Mammary epithelial cell (primary cell): ENCODE measurements at regions of chr17 and their contacts with region 1.

Region 1: DNA sequence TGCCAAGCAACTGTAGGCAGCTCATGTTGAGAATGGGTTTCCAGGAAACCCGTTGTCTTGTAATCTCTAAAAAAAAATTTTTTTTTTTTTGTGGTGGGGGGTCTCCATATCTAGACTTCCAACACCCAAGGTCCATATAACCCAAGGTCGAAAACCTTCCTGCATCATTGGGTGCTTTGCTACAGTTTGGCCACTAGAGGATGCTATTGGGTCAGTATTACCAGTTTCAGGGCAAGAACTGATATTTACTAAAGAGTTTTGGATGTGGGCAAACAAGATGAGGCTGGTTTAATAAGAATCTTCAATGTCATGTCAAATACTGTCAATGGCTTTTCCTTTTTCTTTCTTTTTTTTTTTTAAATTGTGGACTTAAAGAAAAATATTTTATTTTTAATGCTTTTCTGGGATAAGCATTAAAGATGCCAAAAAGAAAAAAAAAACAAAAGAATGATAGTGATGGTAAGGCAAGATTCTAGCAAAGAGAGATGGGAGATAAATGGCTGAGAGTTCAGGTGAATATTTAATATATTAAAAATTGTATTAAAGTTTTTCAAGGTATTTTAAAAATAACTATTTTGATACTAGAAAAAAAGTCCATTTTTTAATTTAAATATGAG is 62.2 kb downstream of the DHRS7C start:
- DNase-seq: peak; percentile 41
- H3K4me3 ChIP-seq: no peak overlapping the region
- H3K27ac ChIP-seq: no peak overlapping the region
- H3K4me1 ChIP-seq: peaks cover 4% of the 10 kb centered on the region
- H3K27me3 ChIP-seq: no peaks in the 10 kb centered on the region
- CTCF ChIP-seq: peak; percentile 100

Region 2: DNA sequence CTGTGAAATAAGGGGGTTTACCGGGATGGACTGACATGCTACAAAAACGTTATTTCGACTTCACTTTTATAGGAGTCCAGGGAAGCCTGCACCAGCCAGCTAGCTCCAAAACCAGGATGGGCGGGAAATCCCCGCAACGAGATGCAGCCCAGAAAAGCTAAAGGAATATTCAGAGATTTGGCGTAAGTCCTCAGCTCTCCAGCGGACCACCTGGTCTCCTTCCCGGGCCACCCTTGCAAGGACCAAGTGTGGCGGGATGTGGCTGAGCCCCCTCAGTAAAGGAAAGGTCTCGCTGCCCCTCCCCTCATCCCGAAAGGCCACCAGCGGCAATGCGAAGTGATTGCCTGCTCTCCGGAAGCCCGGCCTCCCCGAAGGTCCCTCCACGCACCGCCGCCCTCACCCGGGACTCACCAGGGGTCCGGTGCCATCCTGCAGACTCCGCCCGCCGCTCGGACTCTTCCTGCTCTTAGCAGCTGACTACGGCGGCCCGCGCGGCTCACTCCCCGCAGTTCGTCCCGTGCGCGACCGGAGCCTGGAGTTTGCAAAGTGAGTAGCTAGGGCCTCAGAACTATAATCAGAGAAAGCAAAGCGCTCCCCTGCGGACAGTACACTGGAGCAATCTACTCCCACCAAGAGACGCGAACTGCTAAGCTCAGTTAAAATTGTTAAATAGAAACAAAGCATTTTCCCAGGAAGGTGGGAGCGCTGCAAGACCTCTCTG is 153.6 kb before region 1 on chr17 and contains the start of gene STX8:
- CTCF ChIA-PET with region 1: no interaction called
- dilution Hi-C with region 1: no loop called
- in situ Hi-C with region 1: no loop called
- intact Hi-C with region 1: loop called (anchors 1 kb)
- DNase-seq: peak; percentile 84
- H3K4me3 ChIP-seq: peak within 1 kb of the TSS; percentile 69 to 76 (median 75)
- H3K27ac ChIP-seq: peak within 1 kb of the TSS; percentile 33
- H3K4me1 ChIP-seq: peaks cover 14% of the 10 kb centered on the region
- H3K27me3 ChIP-seq: no peaks in the 10 kb centered on the region
- CTCF ChIP-seq: no peak
- total RNA-seq, gene STX8: 45.3 to 49.1 TPM

Region 3: DNA sequence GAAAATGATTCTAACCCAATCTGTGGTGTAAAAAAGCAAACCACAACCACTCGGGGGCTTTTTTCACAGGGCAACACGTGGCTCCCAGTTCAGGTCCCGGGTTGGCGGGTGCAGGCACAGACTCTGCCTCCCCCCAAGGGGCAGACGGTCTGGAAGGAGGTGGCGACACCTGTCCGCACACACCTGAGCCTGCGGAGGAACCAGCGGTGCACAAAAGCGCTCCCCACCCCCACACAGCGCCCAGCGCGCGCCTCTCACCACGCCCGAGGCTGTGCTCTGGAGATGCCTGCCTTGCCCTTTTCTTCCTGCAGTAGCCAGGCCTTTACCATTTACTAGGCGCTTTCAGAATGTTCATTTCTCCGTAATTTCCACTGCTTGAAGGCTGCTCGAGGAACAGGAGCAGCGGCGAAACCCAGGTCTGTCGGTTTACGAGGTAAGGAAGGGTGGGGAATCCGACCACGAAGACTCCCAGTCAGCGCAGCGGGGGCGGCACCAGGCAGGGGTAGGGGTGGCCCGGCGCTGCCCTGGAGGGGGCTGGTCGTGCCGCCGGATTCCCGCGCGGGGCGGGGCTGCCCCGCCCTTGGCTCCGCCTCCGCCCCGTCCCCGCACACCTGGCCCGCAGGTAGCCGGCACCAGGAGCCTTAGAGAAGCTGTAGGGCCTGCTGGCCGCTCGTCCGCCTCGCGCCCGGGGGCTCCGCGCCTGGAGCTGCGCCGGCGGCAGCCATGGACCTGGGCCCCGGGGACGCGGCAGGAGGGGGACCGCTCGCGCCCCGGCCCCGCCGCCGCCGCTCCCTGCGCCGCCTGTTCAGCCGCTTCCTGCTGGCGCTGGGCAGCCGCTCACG is 84.0 kb before region 1 on chr17 and contains the start of gene USP43:
- CTCF ChIA-PET with region 1: no interaction called
- dilution Hi-C with region 1: no loop called
- in situ Hi-C with region 1: no loop called
- intact Hi-C with region 1: loop called (anchors 1 kb)
- DNase-seq: peak; percentile 81
- H3K4me3 ChIP-seq: peak within 1 kb of the TSS; percentile 63 to 79 (median 69)
- H3K27ac ChIP-seq: peak within 1 kb of the TSS; percentile 88
- H3K4me1 ChIP-seq: peaks cover 25% of the 10 kb centered on the region
- H3K27me3 ChIP-seq: no peaks in the 10 kb centered on the region
- CTCF ChIP-seq: peak in 1 of 2 donors; percentile 13
- total RNA-seq, gene USP43: 8.0 to 9.3 TPM

Region 4: DNA sequence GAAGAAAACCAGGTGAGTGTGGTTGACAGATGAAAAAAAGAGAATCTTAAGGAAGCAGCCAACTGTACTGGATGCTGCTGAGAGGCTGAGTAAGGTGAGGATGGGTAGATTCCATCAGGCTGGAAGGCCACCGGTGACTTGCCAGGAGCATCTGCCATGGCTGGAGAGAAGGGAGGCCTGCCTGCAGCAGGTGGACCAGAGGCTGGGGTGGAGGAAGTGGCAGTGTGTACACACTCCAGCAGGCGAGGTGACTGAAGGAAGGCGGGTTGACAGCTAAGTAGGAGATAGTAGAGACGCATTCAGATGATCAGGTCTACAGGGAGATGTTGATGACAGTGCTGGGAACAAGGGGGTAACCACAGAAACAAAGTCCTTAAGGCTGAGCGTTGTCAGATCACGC is 14.3 kb before region 1 on chr17:
- CTCF ChIA-PET with region 1: interaction called, 14 read pairs
- dilution Hi-C with region 1: no loop called
- in situ Hi-C with region 1: no loop called
- intact Hi-C with region 1: no loop called
- DNase-seq: no peak
- H3K4me3 ChIP-seq: no peak overlapping the region
- H3K27ac ChIP-seq: no peak overlapping the region
- H3K4me1 ChIP-seq: no peaks in the 10 kb centered on the region
- H3K27me3 ChIP-seq: no peaks in the 10 kb centered on the region
- CTCF ChIP-seq: no peak

Region 5: GRCh38 chr17:9768381-9768934 is 39.3 kb after region 1 on chr17:
- CTCF ChIA-PET with region 1: no interaction called
- dilution Hi-C with region 1: loop called (anchors 5 kb)
- in situ Hi-C with region 1: no loop called
- intact Hi-C with region 1: loop called (anchors 1 kb)
- DNase-seq: peak; percentile 20
- H3K4me3 ChIP-seq: no peak overlapping the region
- H3K27ac ChIP-seq: no peak overlapping the region
- H3K4me1 ChIP-seq: no peaks in the 10 kb centered on the region
- H3K27me3 ChIP-seq: no peaks in the 10 kb centered on the region
- CTCF ChIP-seq: peak; percentile 36 to 45

Region 6: DNA sequence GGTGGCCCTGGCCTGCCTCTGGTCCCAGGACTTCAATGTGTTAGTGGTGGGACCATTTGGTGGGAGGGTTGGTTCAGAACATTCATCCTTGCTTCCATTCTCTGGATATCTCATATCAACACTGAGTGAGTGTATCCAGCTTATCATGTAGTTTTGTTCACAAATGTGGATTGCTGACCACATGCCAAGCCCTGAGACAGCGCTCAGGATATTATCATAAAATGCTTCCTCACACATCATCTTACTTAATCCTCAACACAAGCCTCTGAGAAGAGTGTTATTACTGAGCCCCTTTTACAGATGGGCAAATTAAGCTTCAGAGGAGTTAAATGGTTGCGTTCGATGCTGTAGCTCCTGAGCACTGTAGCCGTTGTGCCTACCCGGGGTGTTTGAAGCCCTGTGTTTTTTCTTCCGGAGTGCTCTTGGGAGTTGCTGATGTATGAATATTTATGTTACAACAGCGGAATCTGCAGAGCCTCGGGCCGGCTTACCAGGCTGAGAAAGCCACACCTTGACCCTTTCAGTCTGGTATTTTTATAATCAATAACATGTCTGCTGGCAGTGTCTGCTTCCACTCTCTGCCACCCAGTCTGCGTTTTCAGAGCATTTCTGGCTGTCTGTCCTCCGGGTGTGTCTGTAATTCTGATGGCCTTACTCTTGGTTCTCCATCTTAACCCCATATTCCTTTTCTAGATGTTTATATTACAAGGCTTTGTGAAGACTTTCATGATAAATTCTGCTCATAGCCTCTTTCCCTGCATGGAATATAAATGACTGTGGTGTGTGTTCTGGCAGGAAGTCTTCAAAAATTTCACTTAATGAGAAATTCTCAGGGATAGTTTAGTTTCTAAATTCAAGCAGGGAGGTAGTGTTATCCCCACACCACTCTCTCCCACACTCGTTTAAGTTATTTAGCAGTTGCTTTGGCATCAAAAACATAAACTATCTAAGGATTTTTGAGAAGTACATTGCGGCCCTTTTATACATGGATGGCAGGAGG is 99.5 kb after region 1 on chr17:
- CTCF ChIA-PET with region 1: no interaction called
- dilution Hi-C with region 1: no loop called
- in situ Hi-C with region 1: no loop called
- intact Hi-C with region 1: no loop called
- DNase-seq: no peak
- H3K4me3 ChIP-seq: no peak overlapping the region
- H3K27ac ChIP-seq: no peak overlapping the region
- H3K4me1 ChIP-seq: no peaks in the 10 kb centered on the region
- H3K27me3 ChIP-seq: no peaks in the 10 kb centered on the region
- CTCF ChIP-seq: no peak

Region 7: GRCh38 chr17:10618202-10618635 is 889.1 kb after region 1 on chr17:
- CTCF ChIA-PET with region 1: no interaction called
- dilution Hi-C with region 1: no loop called
- in situ Hi-C with region 1: no loop called
- intact Hi-C with region 1: loop called (anchors 5 kb)
- DNase-seq: peak; percentile 68
- H3K4me3 ChIP-seq: no peak overlapping the region
- H3K27ac ChIP-seq: no peak overlapping the region
- H3K4me1 ChIP-seq: peaks cover 28% of the 10 kb centered on the region
- H3K27me3 ChIP-seq: no peaks in the 10 kb centered on the region
- CTCF ChIP-seq: peak; percentile 90 to 97